ENCODE measurements at regions of chrX and their contacts with region 1.

Region 1: GRCh38 chrX:140057001-140057411 is 91.7 kb upstream of the CXorf66 start:
- DNase-seq: peak in 4 of 5 donors; percentile 35 to 45 (median 40)
- H3K4me3 ChIP-seq: no peak overlapping the region
- H3K4me3 Mint-ChIP-seq: peak overlapping the region in 2 of 8 donors; percentile 35 to 54
- H3K27ac ChIP-seq: no peak overlapping the region
- H3K27ac Mint-ChIP-seq: no peak overlapping the region
- H3K4me1 ChIP-seq: no peaks in the 10 kb centered on the region
- H3K4me1 Mint-ChIP-seq: peaks cover 4 to 5% (median 4%) of the 10 kb centered on the region in 4 donors
- H3K27me3 ChIP-seq: no peaks in the 10 kb centered on the region
- H3K27me3 Mint-ChIP-seq: peaks cover 0 to 4% of the 10 kb centered on the region in 2 donors

Region 2: DNA sequence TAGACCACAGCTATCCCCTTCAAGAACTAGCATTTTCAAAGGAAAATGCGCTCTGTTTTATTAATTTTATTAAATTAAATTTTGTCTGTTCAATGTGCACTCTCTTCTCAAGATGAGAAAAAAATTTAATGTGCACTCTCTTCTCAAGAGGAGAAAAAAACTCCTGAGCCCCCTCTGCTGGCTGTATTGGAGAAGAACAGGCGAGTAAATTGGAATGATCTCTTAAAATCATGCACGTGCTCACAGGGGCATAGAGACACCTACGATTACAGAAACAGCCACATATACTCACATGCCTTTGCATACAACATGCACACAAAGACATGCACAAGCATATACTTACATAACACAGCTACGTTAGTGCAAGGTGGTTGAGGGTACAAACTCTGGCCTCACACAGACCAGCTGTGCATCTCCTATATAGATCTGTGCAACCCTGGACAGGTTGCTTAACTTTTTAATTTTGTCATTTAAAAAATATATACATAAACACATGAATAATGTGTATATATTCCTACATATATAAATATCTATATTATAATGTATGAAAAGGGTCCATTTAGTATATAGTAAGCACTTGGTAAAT is 84.5 kb after region 1 on chrX:
- CTCF ChIA-PET with region 1: interaction called, 8 read pairs
- POLR2A ChIA-PET with region 1: no interaction called
- intact Hi-C with region 1: loop called (anchors 1 kb)
- DNase-seq: peak; percentile 23 to 34 (median 23)
- H3K4me3 ChIP-seq: no peak overlapping the region
- H3K4me3 Mint-ChIP-seq: no peak overlapping the region
- H3K27ac ChIP-seq: no peak overlapping the region
- H3K27ac Mint-ChIP-seq: no peak overlapping the region
- H3K4me1 ChIP-seq: no peaks in the 10 kb centered on the region
- H3K4me1 Mint-ChIP-seq: no peaks in the 10 kb centered on the region
- H3K27me3 ChIP-seq: no peaks in the 10 kb centered on the region
- H3K27me3 Mint-ChIP-seq: no peaks in the 10 kb centered on the region

Region 3: DNA sequence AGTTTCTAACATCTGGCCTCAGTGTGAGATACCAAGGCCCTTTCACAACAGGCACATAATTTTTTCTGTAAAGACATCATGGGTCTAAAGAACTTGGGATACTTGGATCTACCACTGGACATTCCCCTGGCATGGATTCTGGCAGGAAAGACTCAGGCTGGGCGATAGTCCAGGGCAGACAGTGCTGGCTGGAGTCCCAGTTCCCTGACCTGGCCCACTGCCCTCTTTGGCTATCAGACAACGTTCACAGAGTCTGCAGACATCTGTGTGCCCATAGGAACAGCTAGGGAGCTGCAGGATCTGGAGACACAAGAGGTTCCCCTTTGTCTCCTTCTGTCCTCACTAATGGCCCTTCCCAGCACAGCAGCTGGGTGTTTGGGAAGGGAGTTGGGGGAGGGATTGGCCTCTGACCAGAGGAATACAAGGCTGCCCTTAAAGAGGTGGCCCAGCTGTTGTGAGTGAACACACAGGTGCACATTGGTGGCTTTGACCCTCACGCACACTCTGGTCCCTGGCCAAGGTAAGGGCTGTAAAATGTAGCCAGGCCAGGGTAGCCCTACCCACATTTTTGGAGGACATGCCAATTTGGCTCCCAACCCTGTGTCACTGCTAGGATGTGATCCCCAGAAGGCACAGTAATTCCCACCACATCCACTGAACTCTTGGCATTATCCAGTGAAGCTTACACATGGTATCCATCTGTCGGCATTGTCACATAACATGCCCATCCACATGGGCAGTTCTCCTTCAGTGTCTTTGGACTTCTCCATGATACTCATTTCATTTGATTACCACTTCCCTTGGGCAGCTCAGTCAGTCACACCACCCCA is 375.6 kb after region 1 on chrX:
- CTCF ChIA-PET with region 1: no interaction called
- POLR2A ChIA-PET with region 1: no interaction called
- intact Hi-C with region 1: no loop called
- DNase-seq: no peak
- H3K4me3 ChIP-seq: no peak overlapping the region
- H3K4me3 Mint-ChIP-seq: no peak overlapping the region
- H3K27ac ChIP-seq: no peak overlapping the region
- H3K27ac Mint-ChIP-seq: no peak overlapping the region
- H3K4me1 ChIP-seq: no peaks in the 10 kb centered on the region
- H3K4me1 Mint-ChIP-seq: no peaks in the 10 kb centered on the region
- H3K27me3 ChIP-seq: no peaks in the 10 kb centered on the region
- H3K27me3 Mint-ChIP-seq: peaks cover 0 to 1% of the 10 kb centered on the region in 2 donors

Region 4: DNA sequence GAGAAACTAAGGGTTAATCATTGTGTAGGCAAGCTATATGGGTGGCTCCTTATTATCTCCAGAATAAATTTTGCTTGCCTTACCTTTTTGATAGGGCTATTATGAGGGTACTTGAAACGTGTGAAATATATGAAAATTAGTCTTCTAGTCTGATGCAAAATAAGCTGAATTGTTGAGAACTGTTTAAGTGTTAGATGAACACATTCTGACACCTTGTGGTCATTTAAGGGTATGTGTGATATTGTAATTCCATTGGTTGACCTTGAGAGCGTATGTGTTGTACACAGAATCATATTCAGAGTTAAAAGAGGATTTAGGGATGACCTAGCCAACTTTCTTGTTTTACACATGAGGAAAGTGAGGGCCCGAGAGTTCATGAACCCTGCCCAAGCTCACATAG is 607.9 kb after region 1 on chrX:
- CTCF ChIA-PET with region 1: no interaction called
- POLR2A ChIA-PET with region 1: no interaction called
- intact Hi-C with region 1: loop called (anchors 10 kb)
- DNase-seq: no peak
- H3K4me3 ChIP-seq: no peak overlapping the region
- H3K4me3 Mint-ChIP-seq: no peak overlapping the region
- H3K27ac ChIP-seq: no peak overlapping the region
- H3K27ac Mint-ChIP-seq: no peak overlapping the region
- H3K4me1 ChIP-seq: no peaks in the 10 kb centered on the region
- H3K4me1 Mint-ChIP-seq: no peaks in the 10 kb centered on the region
- H3K27me3 ChIP-seq: no peaks in the 10 kb centered on the region
- H3K27me3 Mint-ChIP-seq: peaks cover 0 to 1% of the 10 kb centered on the region in 2 donors